B cell (primary cell): ENCODE measurements at regions of chr5 and their contacts with region 1.

Region 1: GRCh38 chr5:42636425-42636824 is 120.2 kb upstream of the CCDC152 start:
- DNase-seq: peak; percentile 19
- ATAC-seq: no peak
- H3K4me3 ChIP-seq: no peak overlapping the region
- H3K4me3 Mint-ChIP-seq: no peak overlapping the region
- H3K27ac ChIP-seq: no peak overlapping the region
- H3K27ac Mint-ChIP-seq: no peak overlapping the region
- H3K4me1 ChIP-seq: no peaks in the 10 kb centered on the region
- H3K4me1 Mint-ChIP-seq: peaks cover 2% of the 10 kb centered on the region
- H3K27me3 ChIP-seq: no peaks in the 10 kb centered on the region
- H3K27me3 Mint-ChIP-seq: peaks cover 11% of the 10 kb centered on the region
- CTCF ChIP-seq: peak; percentile 27

Region 2: GRCh38 chr5:42001673-42002072 is 634.8 kb before region 1 on chr5:
- CTCF ChIA-PET with region 1: no interaction called
- POLR2A ChIA-PET with region 1: no interaction called
- intact Hi-C with region 1: no loop called
- DNase-seq: no peak
- ATAC-seq: no peak
- H3K4me3 ChIP-seq: no peak overlapping the region
- H3K4me3 Mint-ChIP-seq: no peak overlapping the region
- H3K27ac ChIP-seq: no peak overlapping the region
- H3K27ac Mint-ChIP-seq: no peak overlapping the region
- H3K4me1 ChIP-seq: no peaks in the 10 kb centered on the region
- H3K4me1 Mint-ChIP-seq: no peaks in the 10 kb centered on the region
- H3K27me3 ChIP-seq: no peaks in the 10 kb centered on the region
- H3K27me3 Mint-ChIP-seq: peaks cover 3% of the 10 kb centered on the region
- CTCF ChIP-seq: no peak

Region 3: DNA sequence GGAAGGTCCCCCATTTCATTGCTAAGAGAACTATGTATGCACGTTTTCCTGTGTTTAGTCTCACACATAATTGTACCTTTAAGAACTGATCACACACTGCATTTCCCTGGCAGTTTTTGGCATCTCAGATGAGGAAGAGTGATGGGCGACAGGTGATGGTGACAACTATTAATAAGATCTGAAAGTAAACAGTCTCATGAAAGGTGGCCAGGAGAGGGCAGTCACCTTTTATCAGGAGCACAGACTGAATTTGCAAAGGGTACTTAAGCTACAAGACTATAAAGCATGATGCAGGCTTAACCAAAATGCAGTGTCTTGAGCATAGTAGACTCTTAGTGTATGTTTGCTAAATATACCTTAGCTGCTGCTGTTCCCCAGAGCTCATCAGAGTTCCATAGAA is 121.7 kb before region 1 on chr5:
- CTCF ChIA-PET with region 1: interaction called, 15 read pairs
- POLR2A ChIA-PET with region 1: no interaction called
- intact Hi-C with region 1: loop called (anchors 1 kb)
- DNase-seq: peak; percentile 44
- ATAC-seq: peak; percentile 31
- H3K4me3 ChIP-seq: no peak overlapping the region
- H3K4me3 Mint-ChIP-seq: no peak overlapping the region
- H3K27ac ChIP-seq: no peak overlapping the region
- H3K27ac Mint-ChIP-seq: no peak overlapping the region
- H3K4me1 ChIP-seq: no peaks in the 10 kb centered on the region
- H3K4me1 Mint-ChIP-seq: no peaks in the 10 kb centered on the region
- H3K27me3 ChIP-seq: no peaks in the 10 kb centered on the region
- H3K27me3 Mint-ChIP-seq: no peaks in the 10 kb centered on the region
- CTCF ChIP-seq: peak; percentile 46

Region 4: GRCh38 chr5:42621242-42621641 is 15.2 kb before region 1 on chr5:
- CTCF ChIA-PET with region 1: interaction called, 7 read pairs
- POLR2A ChIA-PET with region 1: interaction called, 13 read pairs
- intact Hi-C with region 1: no loop called
- DNase-seq: peak; percentile 74
- ATAC-seq: peak; percentile 94
- H3K4me3 ChIP-seq: peak overlapping the region in 1 of 5 experiments; percentile 26
- H3K4me3 Mint-ChIP-seq: peak overlapping the region; percentile 62
- H3K27ac ChIP-seq: peak overlapping the region; percentile 93 to 97
- H3K27ac Mint-ChIP-seq: peak overlapping the region; percentile 94
- H3K4me1 ChIP-seq: peaks cover 40 to 43% of the 10 kb centered on the region in 2 donors
- H3K4me1 Mint-ChIP-seq: peaks cover 50% of the 10 kb centered on the region
- H3K27me3 ChIP-seq: no peaks in the 10 kb centered on the region
- H3K27me3 Mint-ChIP-seq: peaks cover under 1% of the 10 kb centered on the region
- CTCF ChIP-seq: no peak

Region 5: GRCh38 chr5:42811591-42812446 is 175.4 kb after region 1 on chr5 and contains the start of gene SELENOP:
- CTCF ChIA-PET with region 1: no interaction called
- POLR2A ChIA-PET with region 1: no interaction called
- intact Hi-C with region 1: no loop called
- DNase-seq: no peak
- ATAC-seq: no peak
- H3K4me3 ChIP-seq: no peak within 1 kb of the TSS
- H3K4me3 Mint-ChIP-seq: no peak within 1 kb of the TSS
- H3K27ac ChIP-seq: no peak within 1 kb of the TSS
- H3K27ac Mint-ChIP-seq: no peak within 1 kb of the TSS
- H3K4me1 ChIP-seq: no peaks in the 10 kb centered on the region
- H3K4me1 Mint-ChIP-seq: no peaks in the 10 kb centered on the region
- H3K27me3 ChIP-seq: no peaks in the 10 kb centered on the region
- H3K27me3 Mint-ChIP-seq: no peaks in the 10 kb centered on the region
- CTCF ChIP-seq: no peak
- total RNA-seq, gene SELENOP: 0.12 TPM in 1 of 2 replicates, not detected in the other